Transverse colon (tissue), 4 donors: ENCODE measurements at regions of chr15 and their contacts with region 1.

Region 1: DNA sequence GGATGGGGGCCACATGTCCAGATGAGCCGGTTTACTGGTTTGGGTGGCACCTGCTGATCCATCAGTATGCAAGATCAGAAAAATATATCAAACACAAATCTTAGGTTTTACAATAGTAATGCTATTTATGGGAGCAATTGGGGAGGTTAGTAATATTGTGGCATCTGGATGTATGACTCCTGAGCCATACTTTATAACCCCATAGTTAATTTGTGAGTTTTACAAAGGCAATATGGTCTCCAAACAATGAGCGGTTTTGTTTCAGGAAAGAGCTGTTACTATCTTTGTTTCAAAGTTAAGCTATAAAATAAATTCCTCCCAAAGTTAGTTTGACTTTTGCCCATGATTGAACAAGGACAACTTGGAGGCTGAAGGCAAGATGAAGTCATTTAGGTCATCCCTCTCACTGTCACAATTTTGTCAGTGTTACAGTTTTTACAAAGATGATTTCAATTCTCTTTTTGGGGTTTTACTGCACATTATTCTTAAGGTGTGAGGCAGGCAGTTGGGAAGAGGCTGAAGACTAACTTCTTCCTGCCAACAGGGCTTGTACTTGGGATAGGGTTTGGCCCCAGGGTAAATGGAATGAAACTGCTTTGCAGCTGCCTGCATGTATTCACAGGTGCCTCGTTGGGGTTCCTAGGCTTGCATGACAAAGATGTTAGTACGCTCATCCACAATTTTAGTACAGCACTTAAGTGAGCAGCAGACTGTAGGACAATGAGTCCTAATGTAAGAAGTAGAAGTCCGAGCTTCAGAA is 296.6 kb upstream of the NDN start:
- DNase-seq: peak; percentile 9
- H3K4me3 ChIP-seq: no peak overlapping the region
- H3K27ac ChIP-seq: peak overlapping the region in 1 of 4 donors; percentile 6
- H3K4me1 ChIP-seq: no peaks in the 10 kb centered on the region
- H3K27me3 ChIP-seq: no peaks in the 10 kb centered on the region
- CTCF ChIP-seq: no peak
- EP300 ChIP-seq: no peak
- POLR2A ChIP-seq: no peak

Region 2: DNA sequence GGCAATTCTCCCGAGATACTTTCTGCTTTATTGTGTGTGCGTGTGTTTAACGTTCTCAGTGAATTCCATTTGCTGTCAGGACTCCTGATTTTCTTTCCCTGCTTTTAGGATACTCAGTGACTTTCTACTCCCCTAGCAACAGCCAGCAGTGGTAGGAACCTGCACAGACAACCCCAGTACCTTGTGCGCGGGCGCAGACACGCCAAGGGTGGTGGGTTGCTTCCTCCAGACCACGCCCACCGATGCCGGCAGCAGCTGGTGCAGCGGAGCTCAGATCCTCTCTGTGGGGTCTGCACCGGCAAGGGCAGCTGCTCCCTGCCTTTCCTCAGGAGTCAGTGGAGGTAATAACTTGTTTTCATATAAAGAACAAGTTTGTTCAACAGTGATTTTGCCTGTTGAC is 71.5 kb before region 1 on chr15:
- in situ Hi-C with region 1: loop called in 1 of 4 experiments (anchors 10 kb)
- intact Hi-C with region 1: no loop called
- DNase-seq: no peak
- H3K4me3 ChIP-seq: no peak overlapping the region
- H3K27ac ChIP-seq: no peak overlapping the region
- H3K4me1 ChIP-seq: no peaks in the 10 kb centered on the region
- H3K27me3 ChIP-seq: no peaks in the 10 kb centered on the region
- CTCF ChIP-seq: no peak
- EP300 ChIP-seq: no peak
- POLR2A ChIP-seq: no peak